Naive thymus-derived CD4-positive, alpha-beta T cell (primary cell): ENCODE measurements at regions of chr12 and their contacts with region 1.

Region 1: GRCh38 chr12:112900299-112901145 is 6.2 kb upstream of the OAS1 start:
- DNase-seq: peak in 7 of 9 donors; percentile 15 to 46 (median 32)
- ATAC-seq: peak; percentile 68
- H3K4me3 ChIP-seq: no peak overlapping the region
- H3K4me3 Mint-ChIP-seq: no peak overlapping the region
- H3K27ac ChIP-seq: no peak overlapping the region
- H3K27ac Mint-ChIP-seq: peak overlapping the region in 5 of 9 donors; percentile 15 to 43 (median 34)
- H3K4me1 ChIP-seq: peaks cover 7 to 20% of the 10 kb centered on the region in 2 donors
- H3K4me1 Mint-ChIP-seq: peaks cover 17 to 41% (median 33%) of the 10 kb centered on the region in 7 donors
- H3K27me3 ChIP-seq: no peaks in the 10 kb centered on the region
- H3K27me3 Mint-ChIP-seq: peaks cover 0 to 28% (median 0%) of the 10 kb centered on the region in 5 donors

Region 2: DNA sequence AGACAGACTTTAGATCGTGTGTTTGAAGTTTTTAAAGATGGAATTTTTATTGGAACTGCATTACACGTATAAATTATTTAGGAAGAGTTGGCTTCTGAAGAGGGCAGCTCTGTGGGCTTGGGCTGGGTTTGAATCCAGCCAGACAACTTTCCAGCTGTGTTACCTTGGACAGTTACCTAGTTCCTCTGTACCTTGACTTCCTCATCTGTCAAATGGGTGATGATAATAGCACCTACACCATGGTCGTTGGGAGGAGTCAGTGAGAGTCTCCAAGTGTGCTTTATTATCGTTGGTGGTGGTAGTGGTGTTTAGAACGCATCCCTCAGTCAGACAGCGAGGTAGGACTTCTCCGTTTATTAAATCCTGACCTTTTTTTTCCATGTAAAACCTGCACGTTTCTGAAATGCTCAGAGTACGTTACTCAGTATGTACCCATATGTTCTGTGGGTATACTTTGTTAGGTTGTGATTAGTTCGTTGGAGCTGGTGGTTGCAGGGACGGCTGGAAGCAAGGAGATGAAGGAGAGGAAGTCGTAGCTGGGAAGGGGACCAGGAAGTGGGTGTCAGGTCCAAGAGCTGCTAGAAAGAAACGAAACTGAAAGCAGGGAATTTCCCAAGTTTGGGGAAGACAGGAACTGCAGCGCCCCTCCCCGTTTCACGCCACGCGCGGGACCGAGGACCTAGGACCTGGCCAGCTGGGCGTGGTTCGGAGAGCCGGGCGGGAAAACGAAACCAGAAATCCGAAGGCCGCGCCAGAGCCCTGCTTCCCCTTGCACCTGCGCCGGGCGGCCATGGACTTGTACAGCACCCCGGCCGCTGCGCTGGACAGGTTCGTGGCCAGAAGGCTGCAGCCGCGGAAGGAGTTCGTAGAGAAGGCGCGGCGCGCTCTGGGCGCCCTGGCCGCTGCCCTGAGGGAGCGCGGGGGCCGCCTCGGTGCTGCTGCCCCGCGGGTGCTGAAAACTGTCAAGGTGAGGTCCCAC is 37.5 kb after region 1 on chr12 and contains the start of gene OAS3:
- CTCF ChIA-PET with region 1: no interaction called
- POLR2A ChIA-PET with region 1: no interaction called
- intact Hi-C with region 1: loop called (anchors 1 kb)
- DNase-seq: peak; percentile 31 to 79 (median 50)
- ATAC-seq: peak; percentile 84
- H3K4me3 ChIP-seq: peak within 1 kb of the TSS; percentile 78
- H3K4me3 Mint-ChIP-seq: peak within 1 kb of the TSS; percentile 85 to 100 (median 93)
- H3K27ac ChIP-seq: peak within 1 kb of the TSS; percentile 82
- H3K27ac Mint-ChIP-seq: peak within 1 kb of the TSS; percentile 90 to 97 (median 95)
- H3K4me1 ChIP-seq: peaks cover 18 to 19% of the 10 kb centered on the region in 2 donors
- H3K4me1 Mint-ChIP-seq: peaks cover 22 to 61% (median 31%) of the 10 kb centered on the region in 7 donors
- H3K27me3 ChIP-seq: no peaks in the 10 kb centered on the region
- H3K27me3 Mint-ChIP-seq: no peaks in the 10 kb centered on the region
- total RNA-seq, gene OAS3: 17.8 to 264 (median 21.6) TPM

Region 3: DNA sequence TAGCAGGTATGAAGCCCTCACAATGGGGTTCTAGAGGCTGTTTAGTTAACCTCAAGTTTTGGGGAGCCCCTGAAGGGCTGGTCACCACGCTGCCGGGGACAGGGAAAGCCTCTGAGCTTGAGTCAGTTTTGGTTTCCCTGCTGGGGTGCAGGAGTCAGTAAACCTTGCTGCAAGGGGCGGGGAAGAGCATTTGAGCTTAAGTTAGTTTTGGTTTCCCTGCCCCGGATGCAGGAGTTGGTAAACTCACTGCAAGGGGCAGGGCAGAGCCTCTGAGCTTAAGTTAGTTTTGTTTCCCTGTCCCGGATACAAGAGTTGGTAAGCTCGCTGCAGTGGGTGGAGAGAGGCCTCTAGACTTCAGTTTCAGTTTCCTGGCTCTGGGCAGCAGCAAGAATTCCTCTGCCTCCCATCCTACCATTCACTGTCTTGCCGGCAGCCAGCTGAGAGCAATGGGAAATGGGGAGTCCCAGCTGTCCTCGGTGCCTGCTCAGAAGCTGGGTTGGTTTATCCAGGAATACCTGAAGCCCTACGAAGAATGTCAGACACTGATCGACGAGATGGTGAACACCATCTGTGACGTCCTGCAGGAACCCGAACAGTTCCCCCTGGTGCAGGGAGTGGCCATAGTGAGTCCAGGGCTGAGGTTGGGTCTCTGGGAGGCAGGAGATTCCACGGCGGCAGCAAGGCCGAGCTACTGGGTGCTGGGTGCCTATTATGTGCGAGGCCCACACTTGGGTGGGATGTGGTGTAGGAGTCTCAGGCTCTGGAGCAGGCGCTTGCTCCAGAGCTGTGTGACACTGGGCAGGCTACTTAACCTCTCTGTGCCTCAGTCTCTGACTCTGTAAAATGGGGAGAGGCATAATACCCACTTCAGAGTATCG is 77.9 kb after region 1 on chr12 and contains the start of gene OAS2:
- CTCF ChIA-PET with region 1: interaction called, 13 read pairs
- POLR2A ChIA-PET with region 1: interaction called, 43 read pairs
- intact Hi-C with region 1: loop called (anchors 1 kb)
- DNase-seq: peak; percentile 35 to 89 (median 85)
- ATAC-seq: peak; percentile 97
- H3K4me3 ChIP-seq: peak within 1 kb of the TSS; percentile 99
- H3K4me3 Mint-ChIP-seq: peak within 1 kb of the TSS; percentile 87 to 100 (median 96)
- H3K27ac ChIP-seq: peak within 1 kb of the TSS; percentile 89
- H3K27ac Mint-ChIP-seq: peak within 1 kb of the TSS; percentile 97 to 100 (median 99)
- H3K4me1 ChIP-seq: peaks cover 34 to 37% of the 10 kb centered on the region in 2 donors
- H3K4me1 Mint-ChIP-seq: peaks cover 30 to 59% (median 42%) of the 10 kb centered on the region in 7 donors
- H3K27me3 ChIP-seq: no peaks in the 10 kb centered on the region
- H3K27me3 Mint-ChIP-seq: no peaks in the 10 kb centered on the region
- total RNA-seq, gene OAS2: 29.9 to 238 (median 66.0) TPM

Region 4: GRCh38 chr12:112992541-112993398 is 92.2 kb after region 1 on chr12:
- CTCF ChIA-PET with region 1: interaction called, 9 read pairs
- POLR2A ChIA-PET with region 1: no interaction called
- intact Hi-C with region 1: loop called in 1 of 2 experiments (anchors 1 kb)
- DNase-seq: peak in 8 of 9 donors; percentile 29 to 58 (median 49)
- ATAC-seq: peak; percentile 83
- H3K4me3 ChIP-seq: no peak overlapping the region
- H3K4me3 Mint-ChIP-seq: peak overlapping the region in 1 of 10 donors; percentile 25
- H3K27ac ChIP-seq: no peak overlapping the region
- H3K27ac Mint-ChIP-seq: peak overlapping the region in 7 of 9 donors; percentile 5 to 72 (median 50)
- H3K4me1 ChIP-seq: peaks cover 0 to 5% of the 10 kb centered on the region in 2 donors
- H3K4me1 Mint-ChIP-seq: peaks cover 11 to 62% (median 21%) of the 10 kb centered on the region in 7 donors
- H3K27me3 ChIP-seq: no peaks in the 10 kb centered on the region
- H3K27me3 Mint-ChIP-seq: no peaks in the 10 kb centered on the region

Region 5: GRCh38 chr12:113030875-113031525 is 130.5 kb after region 1 on chr12:
- CTCF ChIA-PET with region 1: interaction called, 6 read pairs
- POLR2A ChIA-PET with region 1: no interaction called
- intact Hi-C with region 1: loop called in 1 of 2 experiments (anchors 1 kb)
- DNase-seq: peak in 4 of 9 donors; percentile 12 to 30 (median 14)
- ATAC-seq: peak; percentile 63
- H3K4me3 ChIP-seq: no peak overlapping the region
- H3K4me3 Mint-ChIP-seq: no peak overlapping the region
- H3K27ac ChIP-seq: no peak overlapping the region
- H3K27ac Mint-ChIP-seq: peak overlapping the region in 1 of 9 donors; percentile 28
- H3K4me1 ChIP-seq: no peaks in the 10 kb centered on the region
- H3K4me1 Mint-ChIP-seq: peaks cover 0 to 8% (median 3%) of the 10 kb centered on the region in 7 donors
- H3K27me3 ChIP-seq: no peaks in the 10 kb centered on the region
- H3K27me3 Mint-ChIP-seq: peaks cover 0 to 24% (median 0%) of the 10 kb centered on the region in 5 donors

Region 6: GRCh38 chr12:113098446-113098896 is 197.9 kb after region 1 on chr12:
- CTCF ChIA-PET with region 1: no interaction called
- POLR2A ChIA-PET with region 1: no interaction called
- intact Hi-C with region 1: loop called in 1 of 2 experiments (anchors 1 kb)
- DNase-seq: peak; percentile 42 to 70 (median 61)
- ATAC-seq: peak; percentile 83
- H3K4me3 ChIP-seq: no peak overlapping the region
- H3K4me3 Mint-ChIP-seq: no peak overlapping the region
- H3K27ac ChIP-seq: peak overlapping the region; percentile 34
- H3K27ac Mint-ChIP-seq: peak overlapping the region in 8 of 9 donors; percentile 31 to 92 (median 70)
- H3K4me1 ChIP-seq: peaks cover 0 to 18% of the 10 kb centered on the region in 2 donors
- H3K4me1 Mint-ChIP-seq: peaks cover 0 to 43% (median 33%) of the 10 kb centered on the region in 7 donors
- H3K27me3 ChIP-seq: no peaks in the 10 kb centered on the region
- H3K27me3 Mint-ChIP-seq: no peaks in the 10 kb centered on the region

Region 7: DNA sequence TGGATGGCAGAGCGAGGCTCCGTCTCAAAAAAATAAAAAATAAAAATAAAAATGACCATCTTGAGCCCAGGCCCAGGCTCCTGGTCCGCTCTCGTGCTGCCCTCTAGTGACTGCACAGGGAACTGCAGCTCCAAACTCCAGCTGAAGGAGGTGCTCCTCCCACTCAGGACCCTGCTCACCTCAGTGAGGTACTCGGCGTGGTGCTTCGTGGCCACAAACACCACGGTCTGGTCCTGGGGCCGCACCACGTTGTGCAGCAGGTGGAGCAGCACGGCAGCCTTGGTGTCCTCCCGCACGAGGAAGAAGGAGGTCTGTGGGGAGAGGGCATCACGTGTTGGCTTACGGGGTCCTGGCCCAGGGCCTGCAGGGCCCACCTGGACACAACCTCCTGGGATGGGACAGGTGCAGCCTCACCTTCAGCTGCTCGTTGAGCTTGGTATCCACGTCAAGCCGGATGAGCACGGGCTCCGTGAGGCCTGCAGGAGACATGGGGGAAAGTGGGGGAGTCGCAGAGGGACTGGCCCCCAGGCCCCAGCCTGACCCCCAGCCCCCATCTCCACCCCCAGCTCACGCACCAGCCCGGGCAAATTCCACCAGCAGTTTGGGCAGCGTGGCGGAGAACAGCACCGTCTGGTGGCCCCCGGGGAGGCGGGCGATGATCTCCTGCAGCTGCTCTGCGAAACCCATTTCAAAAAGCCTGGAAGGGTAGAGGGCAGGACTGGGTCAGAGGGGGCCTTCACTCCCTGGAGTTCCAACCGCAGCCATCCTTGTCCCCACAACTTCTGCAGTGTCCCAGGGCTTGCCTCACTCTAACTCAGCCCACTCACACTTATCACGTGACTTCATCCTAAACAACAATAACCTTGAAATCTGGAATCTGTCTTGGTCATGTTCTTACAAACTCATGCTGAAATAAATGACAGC is 274.2 kb after region 1 on chr12:
- CTCF ChIA-PET with region 1: no interaction called
- POLR2A ChIA-PET with region 1: no interaction called
- intact Hi-C with region 1: loop called in 1 of 2 experiments (anchors 5 kb)
- DNase-seq: peak; percentile 52 to 84 (median 66)
- ATAC-seq: peak; percentile 92
- H3K4me3 ChIP-seq: no peak overlapping the region
- H3K4me3 Mint-ChIP-seq: no peak overlapping the region
- H3K27ac ChIP-seq: no peak overlapping the region
- H3K27ac Mint-ChIP-seq: peak overlapping the region in 5 of 9 donors; percentile 2 to 77 (median 55)
- H3K4me1 ChIP-seq: no peaks in the 10 kb centered on the region
- H3K4me1 Mint-ChIP-seq: peaks cover 2 to 10% (median 6%) of the 10 kb centered on the region in 7 donors
- H3K27me3 ChIP-seq: no peaks in the 10 kb centered on the region
- H3K27me3 Mint-ChIP-seq: no peaks in the 10 kb centered on the region